Activated CD4-positive, alpha-beta T cell treated with anti-CD3 and anti-CD28 coated beads for 36 hours (primary cell): ENCODE measurements at regions of chr22 and their contacts with region 1.

Region 1: GRCh38 chr22:36291831-36292740 is 39.2 kb downstream of the APOL1 start:
- DNase-seq: no peak
- ATAC-seq: no peak
- H3K4me3 Mint-ChIP-seq: no peak overlapping the region
- H3K27ac Mint-ChIP-seq: no peak overlapping the region
- H3K4me1 Mint-ChIP-seq: peaks cover 27% of the 10 kb centered on the region
- H3K27me3 Mint-ChIP-seq: no peaks in the 10 kb centered on the region

Region 2: DNA sequence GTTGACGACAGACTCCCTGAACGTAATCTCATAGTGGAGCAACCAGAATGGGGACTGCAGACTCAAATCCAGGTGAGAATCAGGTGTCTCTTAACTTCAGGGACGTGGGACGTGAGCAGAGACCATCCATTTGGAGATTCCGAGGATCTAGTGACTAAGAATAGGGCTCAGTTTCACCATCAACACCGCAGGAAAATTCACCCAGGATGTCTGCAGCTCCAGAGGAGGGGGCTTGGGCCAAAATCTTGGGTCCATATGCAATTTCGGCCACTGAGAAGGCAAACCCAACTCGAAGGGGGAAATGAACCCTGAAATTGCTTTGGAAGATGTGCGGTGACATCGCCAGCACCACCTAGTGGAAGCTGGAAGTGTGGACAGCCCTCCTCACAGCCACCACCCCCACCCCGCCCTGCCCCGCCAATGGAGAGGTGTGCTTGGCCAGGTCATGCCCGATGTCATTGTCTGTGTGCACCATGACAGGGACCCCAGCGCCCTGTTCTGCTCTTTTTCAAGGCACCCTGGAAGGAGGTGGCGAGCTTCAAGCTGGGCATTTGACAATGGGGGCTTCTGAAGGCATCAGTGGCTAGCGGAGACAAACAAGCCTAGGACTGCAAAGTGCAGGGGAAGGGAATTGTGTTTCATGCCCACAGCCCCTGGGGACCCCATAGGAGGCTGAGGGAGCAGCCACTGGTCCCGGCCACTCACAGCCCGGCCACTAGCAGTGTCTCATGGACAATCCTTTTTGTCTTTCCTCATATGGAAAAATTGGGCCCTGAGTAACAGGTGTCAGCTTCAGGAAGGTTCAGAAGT is 14.4 kb before region 1 on chr22:
- CTCF ChIA-PET with region 1: interaction called, 29 read pairs
- POLR2A ChIA-PET with region 1: no interaction called
- intact Hi-C with region 1: no loop called
- DNase-seq: peak; percentile 88
- ATAC-seq: peak; percentile 82
- H3K4me3 Mint-ChIP-seq: no peak overlapping the region
- H3K27ac Mint-ChIP-seq: peak overlapping the region; percentile 49
- H3K4me1 Mint-ChIP-seq: peaks cover 34% of the 10 kb centered on the region
- H3K27me3 Mint-ChIP-seq: no peaks in the 10 kb centered on the region

Region 3: DNA sequence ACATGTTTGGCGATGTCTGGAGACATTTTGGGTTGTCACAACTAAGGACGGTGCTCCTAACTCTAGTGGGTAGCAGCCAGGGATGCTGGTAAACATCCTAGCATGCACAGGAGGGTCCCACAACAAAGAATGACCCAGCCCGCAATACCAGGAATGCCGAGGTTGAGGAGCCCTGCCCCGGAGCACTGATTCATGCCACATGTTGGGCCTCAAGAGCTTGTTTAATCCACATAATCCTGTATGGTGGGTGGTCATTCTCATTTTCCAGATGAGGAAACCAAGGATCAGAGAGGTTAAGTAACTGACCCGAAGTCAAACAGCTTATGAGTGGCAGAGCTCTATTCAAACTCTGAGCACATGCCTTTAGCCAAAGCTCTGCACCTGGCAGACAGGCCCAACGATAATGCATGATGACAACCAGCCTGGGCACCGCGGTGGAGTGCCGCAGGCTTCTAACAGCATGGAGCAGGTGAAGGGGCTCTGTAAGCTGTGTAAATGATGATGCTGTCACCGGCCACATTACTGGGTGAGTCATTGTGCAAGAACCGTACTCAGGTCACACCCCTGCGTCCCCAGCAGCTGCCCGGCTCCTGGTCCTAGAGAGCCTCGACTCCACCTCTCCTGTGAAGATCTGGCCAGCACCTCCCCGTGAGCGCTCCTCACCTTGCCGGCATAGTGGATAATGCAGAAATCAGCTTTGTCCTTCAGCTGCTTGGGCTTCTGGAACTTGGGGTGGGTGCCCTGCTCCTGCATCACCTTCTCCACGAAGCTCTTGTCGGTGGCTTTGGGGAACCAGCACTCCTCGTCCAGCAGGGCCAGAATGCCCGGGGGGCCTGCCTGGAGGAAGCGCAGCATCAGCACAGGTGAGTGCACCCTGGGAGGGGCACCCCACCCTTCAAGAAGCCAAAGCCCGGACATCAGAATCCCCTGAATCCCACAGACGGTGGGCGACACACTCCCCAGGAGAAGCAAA is 19.6 kb after region 1 on chr22:
- CTCF ChIA-PET with region 1: no interaction called
- POLR2A ChIA-PET with region 1: no interaction called
- intact Hi-C with region 1: loop called in 1 of 2 experiments (anchors 2 kb)
- DNase-seq: no peak
- ATAC-seq: no peak
- H3K4me3 Mint-ChIP-seq: no peak overlapping the region
- H3K27ac Mint-ChIP-seq: no peak overlapping the region
- H3K4me1 Mint-ChIP-seq: no peaks in the 10 kb centered on the region
- H3K27me3 Mint-ChIP-seq: no peaks in the 10 kb centered on the region